SK-N-SH (cell line): ENCODE measurements at regions of chr21 and their contacts with region 1.

Region 1: GRCh38 chr21:21921421-21922232 is 923.4 kb downstream of the NCAM2 start:
- DNase-seq: peak; percentile 16
- H3K4me3 ChIP-seq: no peak overlapping the region; a peak in 1 of 4 replicates
- H3K27ac ChIP-seq: no peak overlapping the region
- H3K4me1 ChIP-seq: peaks cover 0 to 4% of the 10 kb centered on the region in 2 experiments; a peak in 2 of 4 replicates
- H3K27me3 ChIP-seq: no peaks in the 10 kb centered on the region
- CTCF ChIP-seq: peak; percentile 88
- EP300 ChIP-seq: no peak; a peak in 1 of 4 replicates
- RAD21 ChIP-seq: peak; percentile 88

Region 2: DNA sequence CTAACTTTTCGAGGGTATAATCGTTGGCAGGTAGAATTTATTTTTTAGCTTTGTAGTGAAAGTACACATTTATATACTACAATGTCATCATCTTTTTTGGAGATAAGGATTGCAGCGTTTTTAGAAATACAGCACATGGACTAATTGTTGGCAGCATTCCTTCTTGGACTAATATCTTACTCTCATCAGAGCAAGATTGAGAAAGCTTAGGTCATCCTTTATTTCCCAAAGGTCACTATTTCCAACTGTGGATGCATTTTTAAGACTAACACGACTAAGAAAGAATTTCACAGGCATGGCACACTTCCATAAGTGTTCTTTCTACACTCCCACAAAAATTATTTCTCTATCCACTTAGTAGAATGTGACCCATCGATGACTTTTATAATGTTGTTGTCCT is 191.1 kb before region 1 on chr21:
- CTCF ChIA-PET with region 1: no interaction called
- POLR2A ChIA-PET with region 1: no interaction called
- DNase-seq: no peak
- H3K4me3 ChIP-seq: no peak overlapping the region
- H3K27ac ChIP-seq: no peak overlapping the region
- H3K4me1 ChIP-seq: no peaks in the 10 kb centered on the region
- H3K27me3 ChIP-seq: no peaks in the 10 kb centered on the region
- CTCF ChIP-seq: no peak
- EP300 ChIP-seq: no peak
- RAD21 ChIP-seq: no peak

Region 3: GRCh38 chr21:21888931-21889330 is 32.7 kb before region 1 on chr21:
- CTCF ChIA-PET with region 1: no interaction called
- POLR2A ChIA-PET with region 1: no interaction called
- DNase-seq: no peak
- H3K4me3 ChIP-seq: no peak overlapping the region
- H3K27ac ChIP-seq: no peak overlapping the region
- H3K4me1 ChIP-seq: no peaks in the 10 kb centered on the region
- H3K27me3 ChIP-seq: no peaks in the 10 kb centered on the region
- CTCF ChIP-seq: no peak
- EP300 ChIP-seq: no peak
- RAD21 ChIP-seq: no peak

Region 4: DNA sequence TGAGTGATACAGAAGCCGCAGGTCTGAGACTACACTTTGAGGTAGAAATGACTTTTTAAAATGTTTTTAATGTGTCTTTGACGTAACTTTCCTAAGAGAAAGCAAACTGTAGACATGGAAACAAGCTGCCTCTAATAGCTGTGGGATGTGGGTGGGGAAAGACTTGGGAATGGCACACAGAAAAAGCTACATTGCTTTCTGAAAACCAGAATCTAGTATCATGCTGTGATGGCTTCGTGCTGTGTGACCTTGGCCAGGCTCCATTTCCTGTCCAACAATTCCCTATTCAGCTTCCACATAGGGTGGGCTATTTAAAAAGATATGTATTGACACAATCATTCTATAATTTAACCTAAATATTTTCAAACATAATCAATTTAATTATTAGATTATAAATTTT is 14.4 kb before region 1 on chr21:
- CTCF ChIA-PET with region 1: interaction called, 13 read pairs
- POLR2A ChIA-PET with region 1: no interaction called
- DNase-seq: no peak
- H3K4me3 ChIP-seq: no peak overlapping the region
- H3K27ac ChIP-seq: no peak overlapping the region
- H3K4me1 ChIP-seq: no peaks in the 10 kb centered on the region
- H3K27me3 ChIP-seq: no peaks in the 10 kb centered on the region
- CTCF ChIP-seq: no peak
- EP300 ChIP-seq: no peak
- RAD21 ChIP-seq: no peak

Region 5: GRCh38 chr21:22083899-22084298 is 162.3 kb after region 1 on chr21:
- CTCF ChIA-PET with region 1: no interaction called
- POLR2A ChIA-PET with region 1: no interaction called
- DNase-seq: no peak
- H3K4me3 ChIP-seq: no peak overlapping the region
- H3K27ac ChIP-seq: no peak overlapping the region
- H3K4me1 ChIP-seq: no peaks in the 10 kb centered on the region
- H3K27me3 ChIP-seq: no peaks in the 10 kb centered on the region
- CTCF ChIP-seq: no peak
- EP300 ChIP-seq: no peak
- RAD21 ChIP-seq: no peak